ENCODE measurements at regions of chr20 and their contacts with region 1.

Region 1: GRCh38 chr20:2402271-2402980 is 21.7 kb downstream of the TGM6 start:
- DNase-seq: peak; percentile 55
- H3K4me3 Mint-ChIP-seq: no peak overlapping the region
- H3K27ac Mint-ChIP-seq: no peak overlapping the region
- H3K4me1 Mint-ChIP-seq: no peaks in the 10 kb centered on the region
- H3K27me3 Mint-ChIP-seq: no peaks in the 10 kb centered on the region
- CTCF ChIP-seq: peak; percentile 43

Region 2: GRCh38 chr20:2387180-2387577 is 15.2 kb before region 1 on chr20:
- CTCF ChIA-PET with region 1: interaction called, 14 read pairs
- POLR2A ChIA-PET with region 1: interaction called, 3 read pairs
- intact Hi-C with region 1: no loop called
- DNase-seq: peak; percentile 56
- H3K4me3 Mint-ChIP-seq: no peak overlapping the region
- H3K27ac Mint-ChIP-seq: no peak overlapping the region
- H3K4me1 Mint-ChIP-seq: peaks cover 14% of the 10 kb centered on the region
- H3K27me3 Mint-ChIP-seq: no peaks in the 10 kb centered on the region
- CTCF ChIP-seq: peak; percentile 31

Measured in MCF 10A (cell line).